Gastrocnemius medialis (tissue), 4 donors: ENCODE measurements at regions of chr10 and their contacts with region 1.

Region 1: GRCh38 chr10:48725686-48726085 is 41.0 kb downstream of the WDFY4 start:
- DNase-seq: no peak
- ATAC-seq: no peak
- H3K4me3 ChIP-seq: no peak overlapping the region
- H3K27ac ChIP-seq: no peak overlapping the region
- H3K4me1 ChIP-seq: no peaks in the 10 kb centered on the region
- H3K27me3 ChIP-seq: no peaks in the 10 kb centered on the region
- CTCF ChIP-seq: no peak
- POLR2A ChIP-seq: no peak

Region 2: GRCh38 chr10:49571388-49571787 is 845.7 kb after region 1 on chr10:
- in situ Hi-C with region 1: no loop called
- intact Hi-C with region 1: loop called (anchors 5 kb)
- DNase-seq: no peak
- ATAC-seq: no peak
- H3K4me3 ChIP-seq: no peak overlapping the region
- H3K27ac ChIP-seq: no peak overlapping the region
- H3K4me1 ChIP-seq: no peaks in the 10 kb centered on the region
- H3K27me3 ChIP-seq: no peaks in the 10 kb centered on the region
- CTCF ChIP-seq: no peak
- POLR2A ChIP-seq: no peak